ENCODE measurements at regions of chr17 and their contacts with region 1.

Region 1: DNA sequence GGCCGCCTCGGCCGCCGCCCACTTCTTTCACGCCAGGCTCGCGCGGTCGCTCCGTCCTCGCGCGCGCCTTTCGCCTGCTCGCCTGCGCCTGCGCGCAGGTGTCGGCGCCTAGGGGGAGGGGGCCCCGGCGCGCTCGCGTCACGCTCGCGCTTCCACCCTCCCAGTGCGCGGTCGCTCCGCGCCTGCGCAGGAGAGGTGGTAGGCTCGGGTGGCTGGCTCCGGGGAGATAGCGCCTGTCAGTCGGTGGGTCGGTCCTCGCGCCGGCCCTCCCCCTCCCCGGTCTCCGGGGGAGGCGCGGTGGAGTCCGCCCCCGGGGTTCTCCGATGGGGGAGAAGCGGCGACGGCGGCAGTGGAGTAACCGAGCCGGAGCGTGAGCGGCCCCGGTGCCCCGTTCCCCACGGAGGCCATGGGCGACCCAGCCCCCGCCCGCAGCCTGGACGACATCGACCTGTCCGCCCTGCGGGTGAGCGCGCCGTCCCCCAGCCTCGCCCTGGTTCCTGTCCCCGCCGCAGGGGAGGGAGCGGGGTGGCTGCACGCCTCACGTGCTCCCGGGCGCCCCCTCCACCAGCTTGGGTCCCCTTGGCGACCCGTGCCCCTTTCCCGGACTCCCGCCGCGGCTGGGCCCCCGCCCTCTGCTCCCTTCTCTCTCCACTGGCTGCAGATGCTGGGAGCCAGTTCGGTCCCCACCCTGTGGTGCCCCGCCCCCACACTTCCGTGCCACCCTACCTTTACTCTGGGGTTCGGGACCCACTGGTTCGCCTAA is at the start of gene MINK1:
- DNase-seq: peak; percentile 78 to 88
- ATAC-seq: peak; percentile 95 to 96
- H3K4me3 ChIP-seq: peak within 1 kb of the TSS; percentile 74 to 89 (median 80)
- H3K27ac ChIP-seq: peak within 1 kb of the TSS; percentile 83 to 96 (median 89)
- H3K4me1 ChIP-seq: peaks cover 19 to 34% of the 10 kb centered on the region in 2 donors
- H3K27me3 ChIP-seq: no peaks in the 10 kb centered on the region
- CTCF ChIP-seq: no peak
- POLR2A ChIP-seq: peak; percentile 91 to 93
- total RNA-seq, gene MINK1: 11.7 to 20.2 (median 15.3) TPM

Region 2: GRCh38 chr17:4733073-4733531 is 100.3 kb before region 1 on chr17:
- in situ Hi-C with region 1: no loop called
- intact Hi-C with region 1: loop called (anchors 1 kb)
- DNase-seq: no peak
- ATAC-seq: no peak
- H3K4me3 ChIP-seq: no peak overlapping the region
- H3K27ac ChIP-seq: no peak overlapping the region
- H3K4me1 ChIP-seq: peaks cover 0 to 12% of the 10 kb centered on the region in 2 donors
- H3K27me3 ChIP-seq: peaks cover under 1 to 5% (median 2%) of the 10 kb centered on the region in 3 donors
- CTCF ChIP-seq: no peak
- POLR2A ChIP-seq: no peak

Region 3: GRCh38 chr17:4759776-4760236 is 73.6 kb before region 1 on chr17:
- in situ Hi-C with region 1: no loop called
- intact Hi-C with region 1: no loop called
- DNase-seq: no peak
- ATAC-seq: peak in 1 of 2 donors; percentile 30
- H3K4me3 ChIP-seq: no peak overlapping the region
- H3K27ac ChIP-seq: no peak overlapping the region
- H3K4me1 ChIP-seq: no peaks in the 10 kb centered on the region
- H3K27me3 ChIP-seq: peaks cover 2 to 5% (median 4%) of the 10 kb centered on the region in 3 donors
- CTCF ChIP-seq: no peak
- POLR2A ChIP-seq: no peak

Region 4: DNA sequence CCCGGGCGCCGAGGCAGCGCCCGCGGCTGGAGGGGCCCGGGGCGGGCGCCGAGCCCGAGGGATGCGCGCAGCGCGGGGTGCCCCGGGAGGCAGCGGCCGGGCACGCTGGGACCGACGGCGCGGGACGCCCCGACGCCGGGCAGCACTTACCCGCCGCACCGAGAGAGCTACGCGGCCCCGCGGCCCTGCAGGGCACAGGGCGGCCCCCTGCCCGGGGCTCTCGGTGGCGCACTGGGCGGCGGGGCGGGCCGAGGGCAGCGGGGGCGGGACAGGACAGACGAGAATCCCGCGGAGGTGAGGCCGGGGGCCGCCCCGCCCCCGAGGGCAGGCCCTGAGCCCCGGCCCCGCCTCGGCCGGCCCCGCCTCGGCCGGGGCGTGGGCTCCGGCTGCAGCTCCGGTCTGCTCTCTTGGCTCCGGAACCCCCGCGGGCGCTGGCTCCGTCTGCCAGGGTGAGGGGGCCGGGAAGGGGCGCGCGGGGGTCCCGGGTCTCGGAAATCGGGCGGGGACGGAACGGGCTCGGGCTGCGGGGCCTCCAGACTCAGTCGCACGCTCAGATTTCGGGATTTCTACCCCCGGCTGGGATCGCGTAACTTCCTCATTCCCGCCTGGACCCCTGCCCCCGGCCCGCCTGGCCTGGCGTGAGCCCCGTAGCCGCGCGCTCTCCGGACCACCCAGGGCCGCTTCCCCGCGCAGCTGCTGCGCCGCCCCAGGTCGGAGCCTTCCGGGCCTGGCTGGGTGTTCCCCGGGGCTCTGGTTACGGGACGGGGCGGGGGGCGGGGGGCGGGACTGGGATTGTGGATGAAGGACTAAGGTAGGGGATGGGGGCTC is 26.4 kb before region 1 on chr17 and contains the start of gene PLD2:
- in situ Hi-C with region 1: no loop called
- intact Hi-C with region 1: loop called (anchors 1 kb)
- DNase-seq: peak; percentile 65 to 70
- ATAC-seq: peak; percentile 94 to 95
- H3K4me3 ChIP-seq: peak within 1 kb of the TSS; percentile 76 to 97 (median 81)
- H3K27ac ChIP-seq: peak within 1 kb of the TSS; percentile 70 to 81 (median 76)
- H3K4me1 ChIP-seq: peaks cover 9 to 23% of the 10 kb centered on the region in 2 donors
- H3K27me3 ChIP-seq: no peaks in the 10 kb centered on the region
- CTCF ChIP-seq: no peak
- POLR2A ChIP-seq: peak; percentile 34 to 50
- total RNA-seq, gene PLD2: 2.8 to 5.8 (median 4.2) TPM

Region 5: GRCh38 chr17:5373112-5373511 is 539.8 kb after region 1 on chr17:
- in situ Hi-C with region 1: no loop called
- intact Hi-C with region 1: no loop called
- DNase-seq: peak; percentile 36 to 57
- ATAC-seq: peak; percentile 96 to 99
- H3K4me3 ChIP-seq: no peak overlapping the region
- H3K27ac ChIP-seq: peak overlapping the region; percentile 68 to 76 (median 74)
- H3K4me1 ChIP-seq: peaks cover 0 to 4% of the 10 kb centered on the region in 2 donors
- H3K27me3 ChIP-seq: no peaks in the 10 kb centered on the region
- CTCF ChIP-seq: no peak
- POLR2A ChIP-seq: no peak

Measured in gastrocnemius medialis (tissue), 4 donors.